Panc1 (cell line): ENCODE measurements at regions of chr2 and their contacts with region 1.

Region 1: DNA sequence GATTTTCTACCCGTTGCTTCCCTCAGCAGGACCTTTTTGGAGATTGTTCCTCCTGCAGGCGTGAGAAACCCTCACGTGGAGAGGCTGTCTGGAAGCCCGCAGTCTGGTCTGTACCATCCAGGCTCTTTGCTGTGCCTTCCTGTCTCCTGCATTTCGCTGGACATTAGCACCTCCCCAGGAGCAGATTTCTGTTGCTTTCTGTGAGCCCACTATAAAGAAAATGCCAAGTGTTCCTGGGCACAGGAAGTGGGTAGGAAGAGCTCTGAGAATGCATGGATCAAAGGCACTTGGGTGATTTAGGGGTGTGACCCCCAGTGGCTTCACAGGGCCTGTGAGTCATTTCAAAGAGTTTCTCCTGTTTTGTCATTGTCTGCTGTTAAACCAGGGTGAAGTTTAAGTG is 27.3 kb downstream of the SPTBN1 start:
- DNase-seq: no peak
- ATAC-seq: peak; percentile 38; the same call in 1 of the 2 replicates
- H3K4me3 ChIP-seq: no peak overlapping the region
- H3K27ac ChIP-seq: no peak overlapping the region
- H3K4me1 ChIP-seq: peaks cover 13% of the 10 kb centered on the region
- H3K27me3 ChIP-seq: no peaks in the 10 kb centered on the region
- CTCF ChIP-seq: no peak

Region 2: DNA sequence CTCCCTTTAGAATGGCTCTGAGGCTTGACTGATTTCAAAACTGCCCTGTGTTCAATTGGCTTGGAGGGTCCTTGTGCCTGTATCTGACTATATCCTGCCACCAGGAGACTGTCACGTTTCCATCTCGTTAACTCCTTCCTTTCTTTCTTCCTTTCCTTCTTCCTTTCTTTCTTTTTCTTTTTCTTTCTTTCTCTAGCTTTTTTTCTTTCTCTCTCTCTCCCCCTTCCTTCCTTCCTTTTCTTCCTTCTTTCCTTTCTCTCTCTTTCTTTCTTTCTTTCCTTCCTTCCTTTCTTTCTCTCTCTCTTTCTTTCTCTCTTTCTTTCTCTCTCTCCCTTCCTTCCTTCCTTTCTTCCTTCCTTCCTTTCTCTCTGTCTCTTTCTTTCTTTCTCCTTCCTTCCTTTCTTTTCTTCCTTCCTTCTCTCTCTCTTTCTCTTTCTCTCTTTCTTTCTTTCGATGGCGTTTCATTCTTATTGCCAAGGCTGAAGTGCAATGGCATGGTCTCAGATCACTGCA is 201.9 kb after region 1 on chr2:
- CTCF ChIA-PET with region 1: no interaction called
- POLR2A ChIA-PET with region 1: interaction called, 10 read pairs
- in situ Hi-C with region 1: no loop called
- intact Hi-C with region 1: no loop called
- DNase-seq: no peak
- ATAC-seq: no peak
- H3K4me3 ChIP-seq: no peak overlapping the region
- H3K27ac ChIP-seq: no peak overlapping the region
- H3K4me1 ChIP-seq: no peaks in the 10 kb centered on the region
- H3K27me3 ChIP-seq: no peaks in the 10 kb centered on the region; the same call in 1 of the 2 replicates
- CTCF ChIP-seq: no peak